ENCODE measurements at regions of chr15 and their contacts with region 1.

Region 1: GRCh38 chr15:66619151-66619903 is 53.5 kb upstream of the LCTL start:
- DNase-seq: peak; percentile 60
- H3K4me3 Mint-ChIP-seq: no peak overlapping the region
- H3K27ac Mint-ChIP-seq: no peak overlapping the region
- H3K4me1 Mint-ChIP-seq: peaks cover 5% of the 10 kb centered on the region
- H3K27me3 Mint-ChIP-seq: peaks cover 29% of the 10 kb centered on the region

Region 2: GRCh38 chr15:66595931-66596545 is 23.3 kb before region 1 on chr15:
- CTCF ChIA-PET with region 1: no interaction called
- POLR2A ChIA-PET with region 1: no interaction called
- DNase-seq: no peak
- H3K4me3 Mint-ChIP-seq: no peak overlapping the region
- H3K27ac Mint-ChIP-seq: no peak overlapping the region
- H3K4me1 Mint-ChIP-seq: peaks cover 7% of the 10 kb centered on the region
- H3K27me3 Mint-ChIP-seq: peaks cover 5% of the 10 kb centered on the region

Region 3: DNA sequence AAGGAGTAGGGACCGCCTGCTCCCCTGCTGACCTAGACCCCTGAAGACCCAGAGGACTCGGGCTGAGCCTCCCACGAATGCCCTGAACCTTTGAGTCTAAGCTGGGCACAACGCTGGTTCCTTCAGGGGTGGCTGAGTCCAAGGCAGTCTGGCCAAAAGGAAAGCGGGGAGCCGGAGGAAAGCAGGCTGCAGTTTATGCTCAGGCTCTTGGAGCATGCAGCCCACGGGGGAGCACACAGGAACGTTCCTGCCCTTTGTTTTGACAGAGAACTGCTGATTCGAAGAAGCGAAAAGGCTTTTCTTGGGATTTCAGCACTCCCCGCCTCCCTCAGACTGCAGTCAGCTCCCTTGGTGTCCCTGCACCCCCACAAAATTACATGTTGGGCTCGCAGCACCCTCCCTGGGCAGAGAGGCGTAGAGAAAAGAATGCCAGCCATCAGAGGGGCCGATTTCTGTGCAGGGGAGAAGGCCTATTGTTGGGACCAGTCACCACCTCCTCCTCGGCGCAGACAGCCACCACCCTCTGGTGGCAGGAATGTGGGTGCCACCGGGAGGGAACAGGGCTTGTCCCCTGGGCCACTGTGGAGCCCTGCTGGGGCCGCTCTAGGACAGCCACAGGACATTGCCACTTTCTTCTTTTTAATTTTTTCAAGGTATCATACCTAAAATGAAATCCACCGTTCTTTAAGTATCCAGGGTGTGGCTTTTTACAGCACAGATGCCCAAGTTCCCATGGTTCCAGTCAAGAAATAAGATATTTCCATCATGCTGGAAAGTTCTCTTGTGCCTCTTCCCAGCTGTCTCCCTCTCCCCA is 154.9 kb after region 1 on chr15:
- CTCF ChIA-PET with region 1: interaction called, 13 read pairs
- POLR2A ChIA-PET with region 1: no interaction called
- DNase-seq: peak; percentile 62
- H3K4me3 Mint-ChIP-seq: no peak overlapping the region
- H3K27ac Mint-ChIP-seq: no peak overlapping the region
- H3K4me1 Mint-ChIP-seq: no peaks in the 10 kb centered on the region
- H3K27me3 Mint-ChIP-seq: no peaks in the 10 kb centered on the region

Measured in activated CD4-positive, alpha-beta memory T cell treated with anti-CD3 and anti-CD28 coated beads, Interleukin-2, amount 10 ng/mL, durations not matched to agents 7 days and 5 days (primary cell).